Cardiac septum (tissue), 1 donor: ENCODE measurements at regions of chr11 and their contacts with region 1.

Region 1: GRCh38 chr11:75142714-75143419 is 8.0 kb upstream of the SLCO2B1 start:
- DNase-seq: peak; percentile 87

Region 2: GRCh38 chr11:74929431-74930363 is 213.2 kb before region 1 on chr11:
- intact Hi-C with region 1: loop called (anchors 10 kb)
- DNase-seq: peak; percentile 76

Region 3: DNA sequence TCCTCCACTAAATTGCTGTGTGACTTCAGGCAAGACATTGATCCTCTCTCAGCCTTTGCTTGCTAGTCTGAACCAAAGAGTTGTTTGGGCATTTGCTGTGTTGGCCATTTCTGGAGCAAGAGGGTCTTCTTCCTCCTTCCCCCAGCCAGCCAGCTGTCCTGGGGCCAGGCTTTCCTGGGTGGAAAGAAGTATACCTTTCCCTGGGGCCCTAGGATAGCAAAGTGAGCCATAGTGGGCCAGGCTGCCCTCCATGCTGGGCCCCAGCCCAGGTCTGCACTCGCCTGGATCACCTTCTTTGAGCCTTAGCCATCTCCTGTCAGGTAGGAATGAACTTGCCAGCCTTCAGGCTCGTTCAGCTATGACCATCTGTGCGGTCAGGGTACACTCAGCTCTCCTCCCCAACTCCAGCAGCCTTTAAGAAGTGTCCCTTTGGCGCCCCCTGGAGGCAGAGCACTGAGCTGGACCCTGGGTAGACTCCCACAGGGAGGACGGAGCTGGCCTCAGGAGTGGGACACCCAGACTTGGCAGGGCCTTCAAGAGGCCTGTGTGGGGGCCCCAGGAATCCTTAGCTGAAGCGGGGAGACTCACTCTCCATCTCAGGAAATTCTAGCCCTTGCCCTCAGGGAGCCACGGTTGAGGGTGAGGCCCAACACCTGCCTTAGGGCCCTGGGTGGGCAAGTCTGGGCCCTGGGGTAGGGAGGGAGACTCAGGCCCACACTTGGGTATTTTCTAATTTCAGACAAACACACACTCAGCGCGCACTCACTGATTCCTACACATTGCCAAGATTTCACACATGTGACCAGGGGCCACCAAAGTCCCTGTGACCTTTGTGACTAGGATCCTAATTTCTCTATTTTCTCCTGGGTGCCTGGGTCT is 62.1 kb after region 1 on chr11:
- intact Hi-C with region 1: loop called (anchors 1 kb)
- DNase-seq: peak; percentile 89

Region 4: DNA sequence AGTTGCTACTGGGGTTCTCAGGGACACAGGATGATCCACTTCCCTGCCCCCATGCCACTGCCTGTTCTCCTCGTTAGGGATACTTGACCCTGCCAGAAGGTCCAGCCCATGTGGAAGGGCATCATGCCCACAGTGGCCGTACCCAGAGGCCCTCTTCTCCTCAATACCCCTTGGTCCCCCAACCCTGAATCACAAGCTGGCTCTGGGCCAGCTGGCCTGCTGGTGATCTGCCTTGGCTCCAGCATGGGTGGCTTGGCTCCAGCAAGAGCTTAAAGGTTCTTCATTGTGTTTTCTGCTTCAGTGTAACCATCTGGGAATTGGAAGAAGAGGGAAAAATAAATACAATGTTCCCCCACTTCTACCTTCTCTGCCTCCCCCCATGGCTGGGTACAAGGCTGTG is 86.6 kb after region 1 on chr11:
- intact Hi-C with region 1: no loop called
- DNase-seq: peak; percentile 47

Region 5: GRCh38 chr11:75241036-75241905 is 98.4 kb after region 1 on chr11:
- intact Hi-C with region 1: loop called (anchors 2 kb)
- DNase-seq: peak; percentile 94

Region 6: GRCh38 chr11:75313513-75314272 is 170.8 kb after region 1 on chr11:
- intact Hi-C with region 1: no loop called
- DNase-seq: peak; percentile 79